H1 (cell line): ENCODE measurements at regions of chr7 and their contacts with region 1.

Region 1: GRCh38 chr7:95794917-95795515 is 22.7 kb downstream of the DYNC1I1 start:
- DNase-seq: no peak
- H3K4me3 ChIP-seq: no peak overlapping the region
- H3K27ac ChIP-seq: no peak overlapping the region
- H3K4me1 ChIP-seq: no peaks in the 10 kb centered on the region
- H3K27me3 ChIP-seq: peaks cover 10 to 22% (median 17%) of the 10 kb centered on the region in 4 experiments
- CTCF ChIP-seq: peak in 2 of 3 experiments; percentile 66 to 76; a peak in 3 of 4 replicates
- EP300 ChIP-seq: no peak
- POLR2A ChIP-seq: no peak
- RAD21 ChIP-seq: peak; percentile 59 to 70

Region 2: DNA sequence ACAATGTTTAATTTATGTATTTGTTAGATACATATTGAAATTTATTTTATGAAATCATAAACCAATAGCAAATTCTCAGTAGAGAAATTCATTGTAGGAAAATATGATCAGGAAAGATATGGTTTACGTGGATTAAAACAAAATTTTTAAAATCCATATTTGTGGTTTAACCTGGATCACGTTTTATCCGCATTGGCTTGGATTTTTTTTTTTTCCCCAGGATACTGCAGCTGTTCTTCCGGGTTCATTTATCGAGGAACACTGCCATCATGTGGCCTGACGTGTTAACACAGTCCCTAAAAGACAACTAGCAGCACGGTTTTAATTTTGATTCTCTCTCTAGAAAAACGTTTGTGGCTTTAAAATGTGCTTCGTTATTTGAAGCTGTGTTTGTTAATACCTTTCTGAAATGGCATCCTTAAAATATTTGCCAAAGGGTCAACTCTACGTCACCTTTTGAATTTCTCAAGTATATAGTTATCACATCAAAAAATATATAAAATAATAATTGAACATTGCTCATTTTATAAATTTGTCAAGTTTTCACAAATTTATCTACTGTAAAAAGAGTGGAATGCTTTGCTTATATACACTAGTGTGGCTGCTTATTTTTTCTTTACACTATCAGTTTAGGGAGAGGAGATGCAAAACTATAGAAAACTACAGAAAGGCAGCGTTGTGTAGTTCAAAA is 318.0 kb before region 1 on chr7:
- CTCF ChIA-PET with region 1: no interaction called
- POLR2A ChIA-PET with region 1: no interaction called
- DNase-seq: no peak
- H3K4me3 ChIP-seq: no peak overlapping the region
- H3K27ac ChIP-seq: no peak overlapping the region
- H3K4me1 ChIP-seq: no peaks in the 10 kb centered on the region
- H3K27me3 ChIP-seq: no peaks in the 10 kb centered on the region
- CTCF ChIP-seq: peak in 2 of 3 experiments; percentile 70 to 71; a peak in 3 of 4 replicates
- EP300 ChIP-seq: no peak
- POLR2A ChIP-seq: no peak
- RAD21 ChIP-seq: peak; percentile 92 to 94

Region 3: GRCh38 chr7:95730493-95731280 is 64.3 kb before region 1 on chr7:
- CTCF ChIA-PET with region 1: interaction called, 23 read pairs
- POLR2A ChIA-PET with region 1: no interaction called
- DNase-seq: no peak
- H3K4me3 ChIP-seq: no peak overlapping the region
- H3K27ac ChIP-seq: no peak overlapping the region
- H3K4me1 ChIP-seq: no peaks in the 10 kb centered on the region
- H3K27me3 ChIP-seq: no peaks in the 10 kb centered on the region
- CTCF ChIP-seq: no peak
- EP300 ChIP-seq: no peak
- POLR2A ChIP-seq: no peak
- RAD21 ChIP-seq: no peak

Region 4: DNA sequence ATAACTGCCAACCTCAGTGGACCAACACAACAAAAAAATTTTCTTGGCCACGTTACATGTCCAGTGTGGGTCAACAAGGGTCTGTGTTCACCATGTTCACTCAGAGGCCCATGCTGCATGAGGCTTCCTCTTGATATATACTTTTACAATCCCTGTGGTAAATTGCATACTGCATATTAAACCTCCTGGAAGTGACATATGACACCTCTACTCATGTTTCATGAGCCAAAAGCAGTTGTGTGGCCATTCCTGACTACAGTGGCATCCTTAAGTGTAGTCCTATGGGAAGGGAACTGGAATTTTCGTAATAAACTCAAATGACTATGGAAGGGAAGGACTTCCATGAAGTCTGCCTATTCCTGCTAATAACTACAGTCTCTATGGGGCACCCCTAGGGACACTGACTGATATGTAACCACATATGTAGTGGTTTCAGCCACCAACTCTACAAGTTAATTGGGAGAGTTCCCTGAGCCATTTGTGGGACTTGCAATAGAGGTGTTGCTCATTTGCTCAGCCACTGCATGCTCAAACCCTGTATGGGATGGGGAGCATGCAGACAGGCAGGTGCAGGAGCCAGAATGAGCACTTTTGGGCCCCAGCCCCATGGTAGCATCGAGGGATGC is 12.9 kb before region 1 on chr7:
- CTCF ChIA-PET with region 1: interaction called, 56 read pairs
- POLR2A ChIA-PET with region 1: no interaction called
- DNase-seq: no peak
- H3K4me3 ChIP-seq: no peak overlapping the region
- H3K27ac ChIP-seq: no peak overlapping the region
- H3K4me1 ChIP-seq: peaks cover 0 to 7% (median 1%) of the 10 kb centered on the region in 4 experiments; a peak in 2 of 7 replicates
- H3K27me3 ChIP-seq: no peaks in the 10 kb centered on the region
- CTCF ChIP-seq: no peak
- EP300 ChIP-seq: no peak
- POLR2A ChIP-seq: no peak
- RAD21 ChIP-seq: no peak

Region 5: DNA sequence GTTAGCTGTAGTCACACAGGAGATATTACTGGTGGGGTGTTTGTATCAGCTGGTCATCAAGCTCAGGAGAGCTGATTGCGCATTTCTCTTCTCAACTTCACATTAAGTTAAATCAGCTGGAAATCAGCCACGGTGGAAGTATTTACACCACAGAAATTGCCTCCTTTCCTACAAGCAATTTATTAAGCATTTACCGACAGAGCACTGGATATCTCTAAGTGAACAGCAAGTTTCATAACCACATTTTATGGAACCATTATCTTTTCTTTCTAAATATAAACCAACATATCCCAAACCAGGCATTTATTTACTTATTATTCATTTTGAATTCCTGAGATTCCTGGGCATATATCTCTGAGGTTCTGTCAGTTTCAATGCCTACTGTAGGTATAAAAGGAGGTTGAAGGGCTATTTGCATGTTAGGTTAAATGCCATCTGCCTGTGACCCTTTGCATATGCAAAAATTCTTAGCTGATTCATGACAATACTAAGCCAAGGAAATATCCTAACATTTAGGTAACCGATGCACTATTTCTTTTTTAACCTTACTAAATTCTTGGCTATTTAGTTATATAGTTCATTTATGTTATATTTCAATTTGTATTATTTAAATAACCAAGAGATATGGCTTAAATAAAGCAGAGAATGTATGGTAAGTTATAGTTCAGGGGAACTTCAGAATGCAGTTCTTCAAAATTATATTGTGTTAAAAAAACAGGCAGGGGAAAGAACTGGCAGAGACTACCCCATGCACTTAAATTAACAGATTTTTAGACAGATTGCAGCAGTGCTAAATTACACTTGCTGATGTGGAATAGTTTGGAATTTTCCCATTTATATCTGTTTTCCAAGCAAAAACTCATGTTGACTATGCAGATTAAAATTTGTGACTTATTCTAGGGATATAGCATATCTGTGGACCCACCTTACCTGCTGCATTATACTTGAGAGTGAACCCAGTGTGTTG is 34.1 kb after region 1 on chr7:
- CTCF ChIA-PET with region 1: interaction called, 17 read pairs
- POLR2A ChIA-PET with region 1: no interaction called
- DNase-seq: no peak
- H3K4me3 ChIP-seq: peak overlapping the region in 1 of 4 experiments; percentile 34; a peak in 1 of 8 replicates
- H3K27ac ChIP-seq: no peak overlapping the region; the same call in 1 of the 2 replicates
- H3K4me1 ChIP-seq: peaks cover 0 to 13% (median 8%) of the 10 kb centered on the region in 4 experiments; a peak in 5 of 7 replicates
- H3K27me3 ChIP-seq: no peaks in the 10 kb centered on the region
- CTCF ChIP-seq: no peak
- EP300 ChIP-seq: no peak
- POLR2A ChIP-seq: no peak
- RAD21 ChIP-seq: no peak

Region 6: DNA sequence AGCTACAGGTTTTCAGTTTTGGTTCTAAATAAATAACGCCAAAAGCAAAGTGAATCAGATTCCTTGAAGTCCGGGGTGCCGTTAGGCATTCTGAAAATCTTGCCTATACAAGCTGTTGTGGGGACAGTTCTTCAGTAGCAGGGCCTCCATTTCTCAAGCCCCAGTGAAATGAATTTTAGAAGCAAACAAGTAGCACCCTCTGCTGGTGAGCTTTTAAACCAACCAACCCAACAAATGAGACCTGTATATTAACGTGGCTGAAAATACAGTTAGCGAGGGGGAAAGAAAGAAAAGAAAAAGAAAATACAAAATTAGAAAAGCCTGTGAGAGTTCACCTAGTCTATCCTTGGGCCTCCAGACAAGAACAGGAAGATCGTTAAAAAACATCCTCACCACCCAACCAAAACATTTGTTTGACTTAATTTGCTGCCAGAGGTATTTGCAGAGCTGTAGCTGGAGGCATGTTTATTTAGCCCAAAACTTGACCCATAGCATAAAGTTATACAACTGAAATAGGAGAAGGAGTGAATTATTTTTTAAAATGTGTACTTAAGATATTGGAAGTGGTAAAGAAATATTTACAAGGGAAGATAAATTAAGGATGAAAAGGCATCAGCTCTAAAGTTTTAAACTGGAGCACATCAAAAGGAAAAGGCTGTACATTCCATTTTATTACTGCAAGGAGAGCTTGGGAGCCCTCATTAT is 76.2 kb after region 1 on chr7:
- CTCF ChIA-PET with region 1: interaction called, 79 read pairs
- POLR2A ChIA-PET with region 1: no interaction called
- DNase-seq: peak in 1 of 2 experiments; percentile 52
- H3K4me3 ChIP-seq: no peak overlapping the region
- H3K27ac ChIP-seq: no peak overlapping the region
- H3K4me1 ChIP-seq: no peaks in the 10 kb centered on the region
- H3K27me3 ChIP-seq: no peaks in the 10 kb centered on the region; a peak in 1 of 7 replicates
- CTCF ChIP-seq: peak in 2 of 3 experiments; percentile 60 to 71; a peak in 3 of 4 replicates
- EP300 ChIP-seq: no peak
- POLR2A ChIP-seq: no peak
- RAD21 ChIP-seq: peak; percentile 86 to 92